ENCODE measurements at regions of chr10 and their contacts with region 1.

Region 1: DNA sequence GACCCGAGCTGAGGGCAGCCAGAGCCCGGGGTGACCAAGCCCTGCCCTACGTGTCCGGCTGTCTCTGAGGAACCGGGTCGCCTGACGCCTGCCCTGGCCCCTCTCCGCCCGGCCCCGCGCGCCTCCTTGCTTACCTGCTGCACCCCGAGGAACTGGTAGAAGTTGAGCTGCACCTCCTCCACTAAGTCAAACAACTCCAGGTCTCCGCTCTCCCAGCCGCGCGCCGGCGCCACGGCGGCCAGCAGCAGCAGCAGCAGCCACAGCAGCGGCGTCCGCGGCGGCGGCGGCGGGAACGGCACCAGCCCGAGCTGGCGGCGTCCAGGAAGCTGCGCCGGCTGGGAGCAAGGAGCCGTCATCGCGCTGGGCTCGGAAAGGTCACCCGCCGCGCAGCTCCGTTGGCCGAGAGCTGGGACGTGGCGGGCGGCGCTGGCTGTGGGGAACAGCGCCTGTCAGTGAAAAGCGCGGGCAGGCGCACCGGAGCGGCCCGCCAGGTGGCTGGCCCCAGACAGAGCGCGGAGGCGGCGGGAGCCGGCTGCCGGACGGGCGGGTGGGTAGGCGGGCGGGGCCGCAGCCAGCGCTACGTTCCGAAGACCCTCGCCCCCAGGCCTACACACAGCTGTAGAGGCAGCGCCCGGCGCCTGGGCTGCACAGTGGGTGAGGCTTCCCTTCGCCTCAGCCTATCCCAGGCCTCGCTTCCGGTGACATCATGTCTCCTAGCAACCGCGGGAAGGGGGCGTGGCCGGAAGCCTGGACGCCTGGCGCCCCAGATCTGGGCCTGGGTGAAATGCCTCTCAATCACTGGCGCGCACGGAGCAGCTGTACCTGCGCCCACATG is at the start of gene DNAJC1:
- DNase-seq: peak; percentile 98 to 99
- ATAC-seq: peak; percentile 99
- H3K4me3 ChIP-seq: peak within 1 kb of the TSS; percentile 58 to 79
- H3K27ac ChIP-seq: peak within 1 kb of the TSS; percentile 74 to 76
- H3K4me1 ChIP-seq: no peaks in the 10 kb centered on the region
- H3K27me3 ChIP-seq: no peaks in the 10 kb centered on the region
- total RNA-seq, gene DNAJC1: 26.7 to 30.4 TPM

Region 2: DNA sequence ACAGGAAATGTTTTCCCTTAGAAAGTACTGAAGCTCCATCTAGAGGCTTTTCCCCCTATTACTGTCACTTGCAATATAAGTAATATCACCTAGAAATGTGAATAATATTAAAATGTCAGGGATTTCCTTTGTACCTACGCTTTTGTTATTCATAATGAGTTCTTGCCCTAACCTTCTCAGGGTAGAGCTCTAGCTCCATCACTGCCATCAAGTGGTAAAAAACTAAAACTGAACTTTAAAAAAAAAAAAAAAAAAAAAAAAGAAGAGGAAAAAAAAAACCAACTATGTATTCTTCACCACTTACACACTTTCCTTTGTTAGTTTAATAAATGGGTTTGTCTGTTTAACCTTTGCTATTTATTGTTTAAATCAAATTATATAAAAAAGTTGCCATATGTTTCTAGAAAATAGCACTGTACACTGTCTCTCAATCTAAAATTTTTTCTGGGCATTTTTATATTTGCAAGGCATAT is 49.7 kb before region 1 on chr10:
- intact Hi-C with region 1: no loop called
- DNase-seq: no peak
- ATAC-seq: no peak
- H3K4me3 ChIP-seq: no peak overlapping the region
- H3K27ac ChIP-seq: no peak overlapping the region
- H3K4me1 ChIP-seq: no peaks in the 10 kb centered on the region
- H3K27me3 ChIP-seq: no peaks in the 10 kb centered on the region

Region 3: GRCh38 chr10:22228943-22229801 is 225.9 kb after region 1 on chr10:
- intact Hi-C with region 1: loop called (anchors 2 to 10 kb)
- DNase-seq: peak; percentile 89 to 94
- ATAC-seq: peak; percentile 99
- H3K4me3 ChIP-seq: peak overlapping the region; percentile 70 to 90
- H3K27ac ChIP-seq: peak overlapping the region in 1 of 2 donors; percentile 70
- H3K4me1 ChIP-seq: no peaks in the 10 kb centered on the region
- H3K27me3 ChIP-seq: no peaks in the 10 kb centered on the region

Region 4: GRCh38 chr10:22316285-22317120 is 313.2 kb after region 1 on chr10 and contains the start of gene COMMD3:
- intact Hi-C with region 1: loop called (anchors 5 to 10 kb)
- DNase-seq: peak; percentile 93 to 95
- ATAC-seq: peak; percentile 96
- H3K4me3 ChIP-seq: peak within 1 kb of the TSS; percentile 68 to 73
- H3K27ac ChIP-seq: peak within 1 kb of the TSS in 1 of 2 donors; percentile 60
- H3K4me1 ChIP-seq: no peaks in the 10 kb centered on the region
- H3K27me3 ChIP-seq: no peaks in the 10 kb centered on the region
- total RNA-seq, gene COMMD3: 38.9 to 43.7 TPM

Region 5: GRCh38 chr10:22436884-22437619 is 433.8 kb after region 1 on chr10:
- intact Hi-C with region 1: loop called (anchors 5 kb)
- DNase-seq: peak; percentile 95 to 96
- ATAC-seq: peak; percentile 96
- H3K4me3 ChIP-seq: peak overlapping the region; percentile 78 to 81
- H3K27ac ChIP-seq: peak overlapping the region; percentile 68 to 85
- H3K4me1 ChIP-seq: no peaks in the 10 kb centered on the region
- H3K27me3 ChIP-seq: no peaks in the 10 kb centered on the region

Region 6: GRCh38 chr10:22704471-22704911 is 701.2 kb after region 1 on chr10:
- intact Hi-C with region 1: loop called in 1 of 2 experiments (anchors 10 kb)
- DNase-seq: no peak
- ATAC-seq: no peak
- H3K4me3 ChIP-seq: no peak overlapping the region
- H3K27ac ChIP-seq: no peak overlapping the region
- H3K4me1 ChIP-seq: peaks cover 2 to 7% of the 10 kb centered on the region in 2 donors
- H3K27me3 ChIP-seq: no peaks in the 10 kb centered on the region

Region 7: GRCh38 chr10:23067939-23068775 is 1064.9 kb after region 1 on chr10:
- intact Hi-C with region 1: loop called in 1 of 2 experiments (anchors 5 kb)
- DNase-seq: peak; percentile 81 to 91
- ATAC-seq: peak; percentile 84
- H3K4me3 ChIP-seq: no peak overlapping the region
- H3K27ac ChIP-seq: peak overlapping the region in 1 of 2 donors; percentile 23
- H3K4me1 ChIP-seq: peaks cover 0 to 4% of the 10 kb centered on the region in 2 donors
- H3K27me3 ChIP-seq: no peaks in the 10 kb centered on the region